GM12878 (cell line): ENCODE measurements at regions of chr1 and their contacts with region 1.

Region 1: GRCh38 chr1:157073944-157074767 is 25.5 kb downstream of the ETV3L start:
- DNase-seq: no peak
- ATAC-seq: peak; percentile 70
- H3K4me3 ChIP-seq: no peak overlapping the region
- H3K27ac ChIP-seq: no peak overlapping the region
- H3K4me1 ChIP-seq: no peaks in the 10 kb centered on the region
- H3K27me3 ChIP-seq: no peaks in the 10 kb centered on the region
- CTCF ChIP-seq: peak; percentile 45 to 73 (median 60); a peak in 5 of 6 replicates
- EP300 ChIP-seq: no peak
- POLR2A ChIP-seq: no peak
- RAD21 ChIP-seq: peak; percentile 45

Region 2: GRCh38 chr1:156892190-156893047 is 181.7 kb before region 1 on chr1:
- CTCF ChIA-PET with region 1: interaction called, 25 read pairs
- POLR2A ChIA-PET with region 1: no interaction called
- RAD21 ChIA-PET with region 1: interaction called, 5 read pairs
- SMC1A ChIA-PET with region 1: interaction called, 5 read pairs
- in situ Hi-C with region 1: no loop called
- intact Hi-C with region 1: no loop called
- DNase-seq: no peak
- ATAC-seq: peak; percentile 95
- H3K4me3 ChIP-seq: no peak overlapping the region
- H3K27ac ChIP-seq: no peak overlapping the region
- H3K4me1 ChIP-seq: no peaks in the 10 kb centered on the region
- H3K27me3 ChIP-seq: peaks cover 5 to 11% of the 10 kb centered on the region in 2 experiments
- CTCF ChIP-seq: peak; percentile 63 to 87 (median 68)
- EP300 ChIP-seq: no peak
- POLR2A ChIP-seq: no peak
- RAD21 ChIP-seq: peak; percentile 38; the same call in 1 of the 2 replicates

Region 3: DNA sequence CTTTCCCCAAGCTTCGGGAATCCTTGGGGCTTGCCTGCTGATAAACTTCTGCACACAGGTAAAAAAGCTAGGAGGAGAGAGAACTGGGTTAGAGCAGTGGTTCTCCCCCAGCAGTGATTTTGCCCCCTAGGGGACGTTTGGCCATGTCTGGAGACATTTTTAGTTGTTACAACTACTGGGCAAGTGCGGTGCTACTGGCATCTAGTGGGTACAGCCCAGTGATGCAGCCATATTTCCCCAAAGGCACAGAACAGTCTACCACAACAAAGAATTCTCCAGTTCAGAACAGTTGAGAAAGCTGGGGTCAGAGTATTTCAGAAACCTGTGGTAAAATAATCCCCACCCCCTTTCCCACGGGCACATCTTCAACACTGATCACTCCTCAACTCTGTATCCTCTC is 112.4 kb before region 1 on chr1:
- CTCF ChIA-PET with region 1: interaction called, 13 read pairs
- POLR2A ChIA-PET with region 1: no interaction called
- RAD21 ChIA-PET with region 1: interaction called, 4 read pairs
- SMC1A ChIA-PET with region 1: interaction called, 3 read pairs
- in situ Hi-C with region 1: no loop called
- intact Hi-C with region 1: no loop called
- DNase-seq: no peak
- ATAC-seq: peak; percentile 86
- H3K4me3 ChIP-seq: no peak overlapping the region
- H3K27ac ChIP-seq: no peak overlapping the region
- H3K4me1 ChIP-seq: peaks cover 3% of the 10 kb centered on the region
- H3K27me3 ChIP-seq: no peaks in the 10 kb centered on the region; a peak in 1 of 4 replicates
- CTCF ChIP-seq: peak; percentile 47 to 59 (median 53)
- EP300 ChIP-seq: no peak
- POLR2A ChIP-seq: no peak
- RAD21 ChIP-seq: peak; percentile 36; the same call in 1 of the 2 replicates

Region 4: GRCh38 chr1:156980551-156980950 is 93.6 kb before region 1 on chr1:
- CTCF ChIA-PET with region 1: interaction called, 11 read pairs
- POLR2A ChIA-PET with region 1: no interaction called
- RAD21 ChIA-PET with region 1: interaction called, 4 read pairs
- SMC1A ChIA-PET with region 1: interaction called, 4 read pairs
- in situ Hi-C with region 1: no loop called
- intact Hi-C with region 1: no loop called
- DNase-seq: no peak
- ATAC-seq: no peak
- H3K4me3 ChIP-seq: no peak overlapping the region
- H3K27ac ChIP-seq: no peak overlapping the region
- H3K4me1 ChIP-seq: no peaks in the 10 kb centered on the region
- H3K27me3 ChIP-seq: no peaks in the 10 kb centered on the region
- CTCF ChIP-seq: no peak
- EP300 ChIP-seq: no peak
- POLR2A ChIP-seq: no peak
- RAD21 ChIP-seq: no peak

Region 5: GRCh38 chr1:157047033-157047410 is 27.1 kb before region 1 on chr1:
- CTCF ChIA-PET with region 1: interaction called, 15 read pairs
- POLR2A ChIA-PET with region 1: interaction called, 5 read pairs
- RAD21 ChIA-PET with region 1: interaction called, 9 read pairs
- SMC1A ChIA-PET with region 1: interaction called, 3 read pairs
- in situ Hi-C with region 1: no loop called
- intact Hi-C with region 1: no loop called
- DNase-seq: no peak
- ATAC-seq: 0 out of 3 replicates have a peak, but pooled peaks have one; percentile 7
- H3K4me3 ChIP-seq: no peak overlapping the region
- H3K27ac ChIP-seq: no peak overlapping the region
- H3K4me1 ChIP-seq: no peaks in the 10 kb centered on the region
- H3K27me3 ChIP-seq: no peaks in the 10 kb centered on the region; a peak in 2 of 4 replicates
- CTCF ChIP-seq: no peak
- EP300 ChIP-seq: no peak
- POLR2A ChIP-seq: no peak
- RAD21 ChIP-seq: no peak

Region 6: GRCh38 chr1:157156058-157156541 is 81.9 kb after region 1 on chr1:
- CTCF ChIA-PET with region 1: interaction called, 715 read pairs
- POLR2A ChIA-PET with region 1: no interaction called
- RAD21 ChIA-PET with region 1: interaction called, 11 read pairs
- SMC1A ChIA-PET with region 1: no interaction called
- in situ Hi-C with region 1: no loop called
- intact Hi-C with region 1: no loop called
- DNase-seq: no peak
- ATAC-seq: peak; percentile 92
- H3K4me3 ChIP-seq: no peak overlapping the region
- H3K27ac ChIP-seq: no peak overlapping the region
- H3K4me1 ChIP-seq: peaks cover 9% of the 10 kb centered on the region
- H3K27me3 ChIP-seq: peaks cover 0 to 2% of the 10 kb centered on the region in 2 experiments; a peak in 2 of 4 replicates
- CTCF ChIP-seq: peak; percentile 80 to 95 (median 92)
- EP300 ChIP-seq: no peak
- POLR2A ChIP-seq: no peak
- RAD21 ChIP-seq: peak; percentile 86